ENCODE measurements at regions of chr17 and their contacts with region 1.

Region 1: GRCh38 chr17:57995076-57995956 is 7.3 kb upstream of the VEZF1 start:
- DNase-seq: peak in 4 of 5 donors; percentile 67 to 71 (median 69)
- ATAC-seq: peak; percentile 88 to 94 (median 91)
- H3K4me3 ChIP-seq: no peak overlapping the region
- H3K27ac ChIP-seq: peak overlapping the region in 11 of 12 donors; percentile 5 to 98 (median 54)
- H3K4me1 ChIP-seq: peaks cover 0 to 53% (median 25%) of the 10 kb centered on the region in 12 donors
- H3K27me3 ChIP-seq: no peaks in the 10 kb centered on the region
- CTCF ChIP-seq: peak; percentile 46 to 72 (median 68)
- POLR2A ChIP-seq: no peak

Region 2: GRCh38 chr17:57195785-57196460 is 799.4 kb before region 1 on chr17:
- intact Hi-C with region 1: no loop called
- DNase-seq: no peak
- ATAC-seq: no peak
- H3K4me3 ChIP-seq: no peak overlapping the region
- H3K27ac ChIP-seq: no peak overlapping the region
- H3K4me1 ChIP-seq: no peaks in the 10 kb centered on the region
- H3K27me3 ChIP-seq: no peaks in the 10 kb centered on the region
- CTCF ChIP-seq: no peak
- POLR2A ChIP-seq: no peak

Region 3: DNA sequence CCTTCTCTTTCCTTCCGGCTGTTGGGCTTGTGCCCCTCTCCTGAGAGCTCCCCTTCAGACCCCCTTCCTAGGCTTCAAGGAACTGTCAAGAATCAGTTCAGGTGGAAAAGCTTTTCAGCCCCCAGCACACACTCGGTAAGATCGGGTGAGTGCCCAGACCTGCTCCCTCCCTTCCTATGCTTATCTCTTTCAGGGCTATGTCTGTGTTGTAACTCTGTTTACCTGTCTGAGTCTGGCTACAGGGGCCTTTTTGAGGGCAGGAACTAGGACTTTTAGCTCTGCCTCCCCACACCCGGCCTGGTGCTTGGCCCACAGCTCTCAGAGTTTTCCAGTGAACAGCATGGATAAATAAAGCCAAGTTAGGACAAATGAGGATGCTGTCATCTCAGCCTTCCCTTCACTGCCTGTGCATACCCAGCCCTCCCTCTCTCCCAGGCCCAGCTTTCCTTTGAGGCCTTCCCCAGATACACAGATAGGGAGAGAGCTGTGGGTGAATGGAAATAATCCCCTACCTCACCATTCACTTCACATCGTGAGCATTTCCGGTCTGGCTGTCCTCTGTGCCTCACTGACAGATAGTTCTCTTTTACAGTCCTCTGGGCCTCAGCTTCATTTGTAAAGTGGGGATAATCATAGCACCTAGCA is 139.8 kb before region 1 on chr17:
- intact Hi-C with region 1: loop called (anchors 1 to 2 kb)
- DNase-seq: no peak
- ATAC-seq: no peak
- H3K4me3 ChIP-seq: no peak overlapping the region
- H3K27ac ChIP-seq: peak overlapping the region in 7 of 12 donors; percentile 32 to 97 (median 92)
- H3K4me1 ChIP-seq: peaks cover 0 to 57% (median 34%) of the 10 kb centered on the region in 12 donors
- H3K27me3 ChIP-seq: no peaks in the 10 kb centered on the region
- CTCF ChIP-seq: no peak
- POLR2A ChIP-seq: no peak

Region 4: GRCh38 chr17:57861000-57861789 is 134.1 kb before region 1 on chr17:
- intact Hi-C with region 1: loop called (anchors 1 to 2 kb)
- DNase-seq: peak; percentile 65 to 79 (median 78)
- ATAC-seq: peak; percentile 10 to 64 (median 54)
- H3K4me3 ChIP-seq: peak overlapping the region; percentile 33 to 69 (median 56)
- H3K27ac ChIP-seq: peak overlapping the region; percentile 55 to 95 (median 82)
- H3K4me1 ChIP-seq: peaks cover 3 to 46% (median 36%) of the 10 kb centered on the region in 12 donors
- H3K27me3 ChIP-seq: no peaks in the 10 kb centered on the region
- CTCF ChIP-seq: no peak
- POLR2A ChIP-seq: no peak

Region 5: GRCh38 chr17:57875309-57876115 is 119.8 kb before region 1 on chr17:
- intact Hi-C with region 1: loop called in 2 of 10 experiments (anchors 5 kb)
- DNase-seq: peak; percentile 84 to 89 (median 87)
- ATAC-seq: peak; percentile 82 to 90 (median 88)
- H3K4me3 ChIP-seq: peak overlapping the region in 5 of 12 donors; percentile 6 to 39 (median 29)
- H3K27ac ChIP-seq: peak overlapping the region; percentile 56 to 93 (median 86)
- H3K4me1 ChIP-seq: peaks cover 15 to 78% (median 54%) of the 10 kb centered on the region in 12 donors
- H3K27me3 ChIP-seq: no peaks in the 10 kb centered on the region
- CTCF ChIP-seq: peak; percentile 12 to 58 (median 40)
- POLR2A ChIP-seq: no peak

Measured in heart left ventricle (tissue), 16 donors.